ENCODE measurements at regions of chr17 and their contacts with region 1.

Region 1: DNA sequence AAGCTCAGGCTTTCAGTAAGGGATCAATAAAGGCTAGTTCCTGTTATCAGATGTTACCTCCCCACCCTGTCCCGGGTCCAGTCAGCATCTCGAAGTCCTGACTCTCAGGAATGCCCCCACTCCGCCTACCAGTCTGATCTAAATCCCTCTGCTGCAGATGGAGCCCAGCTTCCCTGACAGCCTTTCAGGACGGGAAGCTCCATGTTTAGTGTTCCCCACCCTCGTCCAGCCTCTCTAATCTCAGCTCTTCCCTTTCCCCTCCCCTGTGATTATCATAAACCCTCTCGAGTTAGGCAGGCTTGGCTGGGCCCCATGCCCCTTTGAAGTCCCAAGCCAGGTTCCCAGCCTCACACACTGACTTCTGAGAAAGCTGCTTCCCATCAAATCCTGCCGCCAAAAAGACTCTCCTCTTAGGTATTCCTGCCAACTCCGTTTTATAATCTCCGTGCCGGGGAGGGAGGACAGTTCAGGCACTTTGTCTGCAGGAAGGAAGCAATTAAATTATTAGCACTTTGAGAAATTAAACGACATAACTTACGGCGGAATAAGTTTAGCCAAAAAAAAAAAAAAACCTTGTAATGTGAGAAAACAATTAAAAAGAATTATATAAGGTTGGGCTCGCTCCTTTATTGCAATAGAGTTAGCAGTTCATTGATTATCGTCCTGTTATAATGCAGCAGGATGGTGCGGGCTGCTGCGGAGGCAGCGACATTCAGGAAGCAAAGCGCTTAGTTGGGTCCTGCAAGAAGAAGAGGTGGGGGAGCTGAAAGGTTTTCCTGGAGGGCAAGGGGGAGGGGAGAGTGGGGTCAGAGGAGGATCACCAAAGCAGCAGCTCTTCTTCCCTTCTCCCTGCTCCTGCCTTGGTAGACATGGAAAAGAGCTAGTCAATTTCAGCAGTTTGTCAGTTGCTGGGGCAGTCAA is 16.8 kb upstream of the ETV4 start:
- DNase-seq: no peak
- ATAC-seq: peak; percentile 67
- H3K4me3 Mint-ChIP-seq: peak overlapping the region; percentile 53
- H3K27ac Mint-ChIP-seq: no peak overlapping the region
- H3K4me1 Mint-ChIP-seq: peaks cover 36% of the 10 kb centered on the region
- H3K27me3 Mint-ChIP-seq: peaks cover 7% of the 10 kb centered on the region
- CTCF ChIP-seq: no peak

Region 2: DNA sequence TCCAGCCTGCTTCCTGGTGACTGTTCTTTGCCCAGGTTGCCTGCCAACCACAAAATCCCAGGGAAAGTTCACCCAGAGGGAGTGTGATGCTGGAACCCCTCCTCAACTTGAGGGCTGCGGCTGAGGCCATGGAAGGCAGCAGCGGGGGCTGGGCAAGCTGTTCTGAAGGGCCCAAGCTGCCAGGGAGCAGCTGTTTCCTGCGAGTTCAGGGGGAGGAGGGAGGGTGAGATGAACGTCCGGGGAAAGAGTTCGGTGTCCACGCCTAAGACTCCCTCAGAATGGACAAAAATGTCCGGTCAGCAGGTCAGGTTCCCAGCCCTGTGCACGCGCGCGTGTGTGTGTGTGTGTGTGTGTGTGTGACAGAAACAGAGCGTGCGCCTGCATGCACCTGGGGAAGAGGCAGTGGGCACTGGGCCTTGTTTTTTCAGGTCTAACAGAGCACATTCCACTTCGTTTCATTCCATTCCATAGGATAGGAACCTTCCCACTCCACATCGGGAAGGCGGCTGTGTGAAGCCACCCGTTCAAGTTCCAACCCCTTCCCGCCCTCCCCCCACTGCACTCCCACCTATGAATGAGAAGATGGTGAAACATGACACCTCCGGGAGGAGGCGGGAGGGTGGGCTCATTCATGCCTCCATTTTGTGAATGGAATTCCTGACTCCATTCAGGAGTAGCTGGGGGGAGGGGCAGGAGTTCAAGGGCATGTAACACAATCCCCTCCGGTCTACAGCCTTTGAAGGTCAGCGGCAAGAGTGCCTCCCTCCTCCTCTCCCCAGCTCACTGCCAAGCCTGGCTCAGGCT is 32.5 kb before region 1 on chr17:
- CTCF ChIA-PET with region 1: interaction called, 10 read pairs
- POLR2A ChIA-PET with region 1: interaction called, 4 read pairs
- DNase-seq: peak; percentile 99
- ATAC-seq: peak; percentile 91
- H3K4me3 Mint-ChIP-seq: peak overlapping the region; percentile 58
- H3K27ac Mint-ChIP-seq: peak overlapping the region; percentile 98
- H3K4me1 Mint-ChIP-seq: peaks cover 78% of the 10 kb centered on the region
- H3K27me3 Mint-ChIP-seq: no peaks in the 10 kb centered on the region
- CTCF ChIP-seq: no peak

Region 3: GRCh38 chr17:43576563-43577229 is 13.8 kb after region 1 on chr17:
- CTCF ChIA-PET with region 1: interaction called, 28 read pairs
- POLR2A ChIA-PET with region 1: no interaction called
- DNase-seq: peak; percentile 85
- ATAC-seq: peak; percentile 83
- H3K4me3 Mint-ChIP-seq: peak overlapping the region; percentile 51
- H3K27ac Mint-ChIP-seq: no peak overlapping the region
- H3K4me1 Mint-ChIP-seq: peaks cover 36% of the 10 kb centered on the region
- H3K27me3 Mint-ChIP-seq: no peaks in the 10 kb centered on the region
- CTCF ChIP-seq: peak; percentile 89

Region 4: GRCh38 chr17:43667947-43668348 is 105.0 kb after region 1 on chr17:
- CTCF ChIA-PET with region 1: no interaction called
- POLR2A ChIA-PET with region 1: no interaction called
- DNase-seq: no peak
- ATAC-seq: no peak
- H3K4me3 Mint-ChIP-seq: no peak overlapping the region
- H3K27ac Mint-ChIP-seq: no peak overlapping the region
- H3K4me1 Mint-ChIP-seq: peaks cover 36% of the 10 kb centered on the region
- H3K27me3 Mint-ChIP-seq: no peaks in the 10 kb centered on the region
- CTCF ChIP-seq: no peak

Region 5: GRCh38 chr17:43766413-43767052 is 203.6 kb after region 1 on chr17:
- CTCF ChIA-PET with region 1: interaction called, 10 read pairs
- POLR2A ChIA-PET with region 1: no interaction called
- DNase-seq: peak; percentile 86
- ATAC-seq: peak; percentile 50
- H3K4me3 Mint-ChIP-seq: no peak overlapping the region
- H3K27ac Mint-ChIP-seq: no peak overlapping the region
- H3K4me1 Mint-ChIP-seq: peaks cover 9% of the 10 kb centered on the region
- H3K27me3 Mint-ChIP-seq: no peaks in the 10 kb centered on the region
- CTCF ChIP-seq: peak; percentile 82